ENCODE measurements at regions of chr7 and their contacts with region 1.

Region 1: GRCh38 chr7:2680792-2681490 is 7.1 kb upstream of the AMZ1 start:
- DNase-seq: peak; percentile 65
- H3K4me3 ChIP-seq: no peak overlapping the region
- H3K27ac ChIP-seq: no peak overlapping the region
- H3K4me1 ChIP-seq: no peaks in the 10 kb centered on the region
- H3K27me3 ChIP-seq: no peaks in the 10 kb centered on the region
- CTCF ChIP-seq: peak; percentile 65 to 83
- POLR2A ChIP-seq: no peak

Region 2: GRCh38 chr7:2451171-2452073 is 229.5 kb before region 1 on chr7:
- CTCF ChIA-PET with region 1: interaction called, 83 read pairs
- POLR2A ChIA-PET with region 1: no interaction called
- dilution Hi-C with region 1: no loop called
- intact Hi-C with region 1: loop called (anchors 1 kb)
- DNase-seq: peak; percentile 63
- H3K4me3 ChIP-seq: no peak overlapping the region
- H3K27ac ChIP-seq: no peak overlapping the region
- H3K4me1 ChIP-seq: peaks cover 5% of the 10 kb centered on the region
- H3K27me3 ChIP-seq: no peaks in the 10 kb centered on the region
- CTCF ChIP-seq: peak; percentile 95 to 97
- POLR2A ChIP-seq: no peak

Region 3: GRCh38 chr7:2477447-2478398 is 203.2 kb before region 1 on chr7:
- CTCF ChIA-PET with region 1: interaction called, 12 read pairs
- POLR2A ChIA-PET with region 1: no interaction called
- dilution Hi-C with region 1: no loop called
- intact Hi-C with region 1: loop called (anchors 1 kb)
- DNase-seq: peak; percentile 53
- H3K4me3 ChIP-seq: no peak overlapping the region
- H3K27ac ChIP-seq: no peak overlapping the region
- H3K4me1 ChIP-seq: no peaks in the 10 kb centered on the region
- H3K27me3 ChIP-seq: peaks cover 0 to 4% of the 10 kb centered on the region in 2 experiments
- CTCF ChIP-seq: peak; percentile 81 to 95
- POLR2A ChIP-seq: no peak

Region 4: DNA sequence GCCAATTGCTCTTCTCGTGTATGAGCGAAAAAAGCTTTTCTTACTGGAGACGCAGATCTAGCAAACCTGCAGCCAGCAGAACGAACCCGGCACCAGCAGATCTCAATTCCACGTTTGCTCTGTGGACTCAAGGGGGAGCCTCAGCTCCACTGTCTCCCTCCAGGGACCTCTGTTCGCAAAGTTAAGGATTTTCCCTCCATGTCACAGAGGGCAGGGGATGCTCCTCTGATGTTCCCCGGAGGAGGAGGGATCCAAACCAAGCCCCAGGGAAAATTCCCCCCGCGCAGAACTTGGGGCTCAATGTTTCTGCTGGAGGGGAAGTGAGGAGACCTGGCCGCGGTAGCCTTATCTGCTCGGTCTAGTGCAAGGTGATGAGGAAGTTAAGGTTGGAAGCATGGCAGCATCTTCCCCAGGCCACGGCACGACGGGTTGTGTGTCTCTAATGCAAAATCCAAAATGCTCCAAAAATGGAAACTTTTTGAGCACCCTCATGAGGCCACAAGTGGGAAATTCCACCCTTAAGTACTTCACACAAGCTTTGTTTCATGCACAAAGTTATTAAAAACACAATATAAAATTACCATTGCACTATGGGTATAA is 113.2 kb before region 1 on chr7:
- CTCF ChIA-PET with region 1: interaction called, 18 read pairs
- POLR2A ChIA-PET with region 1: no interaction called
- dilution Hi-C with region 1: no loop called
- intact Hi-C with region 1: loop called (anchors 1 kb)
- DNase-seq: no peak
- H3K4me3 ChIP-seq: no peak overlapping the region
- H3K27ac ChIP-seq: no peak overlapping the region
- H3K4me1 ChIP-seq: peaks cover 17% of the 10 kb centered on the region
- H3K27me3 ChIP-seq: no peaks in the 10 kb centered on the region
- CTCF ChIP-seq: peak; percentile 25 to 57
- POLR2A ChIP-seq: no peak

Region 5: GRCh38 chr7:2632733-2633537 is 48.0 kb before region 1 on chr7:
- CTCF ChIA-PET with region 1: no interaction called
- POLR2A ChIA-PET with region 1: no interaction called
- dilution Hi-C with region 1: no loop called
- intact Hi-C with region 1: no loop called
- DNase-seq: peak; percentile 61
- H3K4me3 ChIP-seq: peak overlapping the region; percentile 80 to 97 (median 83)
- H3K27ac ChIP-seq: peak overlapping the region; percentile 90
- H3K4me1 ChIP-seq: peaks cover 31% of the 10 kb centered on the region
- H3K27me3 ChIP-seq: no peaks in the 10 kb centered on the region
- CTCF ChIP-seq: no peak
- POLR2A ChIP-seq: no peak

Region 6: DNA sequence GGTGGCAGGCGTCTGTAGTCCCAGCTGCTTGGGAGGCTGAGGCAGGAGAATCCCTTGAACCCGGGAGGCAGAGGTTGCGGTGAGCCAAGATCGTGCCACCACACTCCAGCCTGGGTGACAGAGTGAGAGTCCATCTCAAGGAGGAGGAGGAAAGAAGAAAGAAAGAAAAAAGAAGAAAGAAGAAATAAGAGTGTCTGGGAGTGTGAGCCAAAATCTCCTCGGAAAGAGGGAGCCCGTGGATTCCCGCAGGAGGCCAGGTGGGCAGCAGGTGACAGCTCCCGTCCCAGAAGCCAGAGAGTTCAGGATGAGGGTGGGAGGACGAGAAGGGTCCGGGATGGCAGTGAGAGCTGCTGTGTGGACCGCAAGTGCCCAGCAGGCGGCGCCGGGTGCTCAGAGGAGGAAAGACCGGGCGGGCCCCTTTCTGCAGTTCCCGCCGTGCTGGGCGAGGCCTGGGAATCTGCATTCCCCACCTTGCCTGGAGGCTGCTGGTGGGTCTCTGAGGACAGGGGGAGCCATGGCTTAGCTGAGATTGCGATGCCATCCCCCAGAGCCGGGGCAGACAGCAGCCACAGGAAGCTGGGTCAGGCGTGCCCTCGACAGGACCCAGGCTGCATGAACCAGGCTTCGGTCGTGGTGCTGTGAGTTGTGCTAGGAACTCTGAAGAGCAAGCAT is 10.1 kb before region 1 on chr7:
- CTCF ChIA-PET with region 1: interaction called, 44 read pairs
- POLR2A ChIA-PET with region 1: no interaction called
- dilution Hi-C with region 1: no loop called
- intact Hi-C with region 1: no loop called
- DNase-seq: peak; percentile 35
- H3K4me3 ChIP-seq: no peak overlapping the region
- H3K27ac ChIP-seq: no peak overlapping the region
- H3K4me1 ChIP-seq: no peaks in the 10 kb centered on the region
- H3K27me3 ChIP-seq: peaks cover 0 to 3% of the 10 kb centered on the region in 2 experiments
- CTCF ChIP-seq: peak; percentile 84 to 95
- POLR2A ChIP-seq: no peak